ENCODE measurements at regions of chr7 and their contacts with region 1.

Region 1: GRCh38 chr7:128883622-128884501 is 21.2 kb downstream of the ATP6V1F start:
- DNase-seq: peak; percentile 69
- H3K4me3 Mint-ChIP-seq: no peak overlapping the region
- H3K27ac Mint-ChIP-seq: no peak overlapping the region
- H3K4me1 Mint-ChIP-seq: no peaks in the 10 kb centered on the region
- H3K27me3 Mint-ChIP-seq: peaks cover 2% of the 10 kb centered on the region

Region 2: GRCh38 chr7:128841921-128842651 is 41.8 kb before region 1 on chr7:
- intact Hi-C with region 1: loop called (anchors 2 kb)
- DNase-seq: peak; percentile 41
- H3K4me3 Mint-ChIP-seq: no peak overlapping the region
- H3K27ac Mint-ChIP-seq: no peak overlapping the region
- H3K4me1 Mint-ChIP-seq: peaks cover 2% of the 10 kb centered on the region
- H3K27me3 Mint-ChIP-seq: no peaks in the 10 kb centered on the region

Region 3: DNA sequence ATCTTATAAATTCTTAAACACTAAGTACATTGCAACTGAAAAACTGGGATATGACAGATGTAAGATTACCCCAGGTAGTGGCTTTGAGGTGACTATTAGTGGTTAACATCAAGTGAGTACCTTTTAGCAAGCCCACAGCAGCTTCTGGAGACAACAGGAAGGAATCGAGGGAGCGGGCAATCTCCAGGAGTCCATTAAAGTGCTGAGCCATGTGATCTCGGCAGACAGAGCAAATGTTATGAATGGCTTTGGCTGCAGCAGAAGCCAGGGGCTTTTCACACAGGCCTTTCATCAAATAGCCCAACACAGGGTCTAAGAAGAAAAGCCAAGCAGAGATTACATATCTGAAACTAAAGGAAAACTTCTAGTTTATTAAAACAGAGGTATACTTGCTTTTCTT is 102.7 kb after region 1 on chr7:
- intact Hi-C with region 1: no loop called
- DNase-seq: no peak
- H3K4me3 Mint-ChIP-seq: no peak overlapping the region
- H3K27ac Mint-ChIP-seq: no peak overlapping the region
- H3K4me1 Mint-ChIP-seq: no peaks in the 10 kb centered on the region
- H3K27me3 Mint-ChIP-seq: no peaks in the 10 kb centered on the region

Measured in activated T-helper 2 cell treated with anti-CD3 and anti-CD28 coated beads, Interferon-gamma antibody, Interleukin-2, Interleukin-4, amounts not matched to agents 10 μg/mL and 5 μg/mL and 100 μg/mL, durations not matched to agents 14 hours and 24 hours and 36 hours (primary cell).